Caco-2 (cell line): ENCODE measurements at regions of chr6 and their contacts with region 1.

Region 1: DNA sequence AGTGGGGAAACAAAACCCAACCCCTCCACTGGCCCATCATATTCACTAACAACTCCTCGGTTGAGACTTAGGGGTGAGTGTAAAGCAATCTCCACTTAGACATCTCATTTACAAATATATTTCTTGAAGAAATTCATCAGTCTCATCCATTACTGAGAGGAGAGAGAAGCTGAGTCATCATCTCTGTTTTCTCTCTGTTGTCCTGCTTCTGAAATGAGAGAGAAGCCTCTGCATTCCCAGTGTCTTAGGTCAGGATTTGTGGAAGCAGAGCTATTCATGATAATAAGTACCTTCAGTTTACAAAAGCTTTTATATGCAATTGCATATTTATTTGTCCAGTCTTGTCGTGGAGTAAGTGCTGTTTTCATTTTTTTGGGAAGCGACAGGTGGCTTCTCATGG is 879 bp downstream of the MEP1A start:
- DNase-seq: no peak
- H3K4me3 ChIP-seq: peak overlapping the region; percentile 28
- H3K4me3 Mint-ChIP-seq: peak overlapping the region; percentile 63
- H3K27ac Mint-ChIP-seq: peak overlapping the region; percentile 23
- H3K4me1 ChIP-seq: peaks cover 52% of the 10 kb centered on the region
- H3K4me1 Mint-ChIP-seq: peaks cover 52% of the 10 kb centered on the region
- H3K27me3 ChIP-seq: no peaks in the 10 kb centered on the region
- H3K27me3 Mint-ChIP-seq: no peaks in the 10 kb centered on the region
- CTCF ChIP-seq: no peak

Region 2: DNA sequence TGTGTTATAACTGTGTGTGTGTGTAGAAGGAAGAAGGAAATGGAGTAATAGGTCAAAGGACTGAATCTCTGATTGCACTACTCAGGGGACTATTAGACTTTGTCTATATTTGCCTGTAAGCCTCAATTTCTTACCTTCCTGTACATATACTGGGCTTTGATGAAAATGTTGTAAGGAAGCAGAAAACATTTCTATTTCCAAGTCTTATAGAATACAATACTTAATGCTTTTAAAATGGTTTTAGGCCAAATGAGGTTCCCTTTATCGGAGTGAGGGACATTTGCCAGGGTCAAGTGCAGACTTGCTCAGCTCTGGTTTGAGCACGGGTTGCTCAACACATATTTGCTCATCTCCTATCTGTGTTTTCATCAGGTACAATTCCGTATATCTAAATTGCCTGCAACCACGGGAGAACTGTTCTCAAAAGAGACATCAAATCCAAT is 27.4 kb after region 1 on chr6:
- CTCF ChIA-PET with region 1: interaction called, 3 read pairs
- POLR2A ChIA-PET with region 1: no interaction called
- intact Hi-C with region 1: loop called (anchors 1 kb)
- DNase-seq: no peak
- H3K4me3 ChIP-seq: no peak overlapping the region
- H3K4me3 Mint-ChIP-seq: no peak overlapping the region
- H3K27ac Mint-ChIP-seq: no peak overlapping the region
- H3K4me1 ChIP-seq: peaks cover 25% of the 10 kb centered on the region
- H3K4me1 Mint-ChIP-seq: peaks cover 7% of the 10 kb centered on the region
- H3K27me3 ChIP-seq: no peaks in the 10 kb centered on the region
- H3K27me3 Mint-ChIP-seq: no peaks in the 10 kb centered on the region
- CTCF ChIP-seq: no peak

Region 3: DNA sequence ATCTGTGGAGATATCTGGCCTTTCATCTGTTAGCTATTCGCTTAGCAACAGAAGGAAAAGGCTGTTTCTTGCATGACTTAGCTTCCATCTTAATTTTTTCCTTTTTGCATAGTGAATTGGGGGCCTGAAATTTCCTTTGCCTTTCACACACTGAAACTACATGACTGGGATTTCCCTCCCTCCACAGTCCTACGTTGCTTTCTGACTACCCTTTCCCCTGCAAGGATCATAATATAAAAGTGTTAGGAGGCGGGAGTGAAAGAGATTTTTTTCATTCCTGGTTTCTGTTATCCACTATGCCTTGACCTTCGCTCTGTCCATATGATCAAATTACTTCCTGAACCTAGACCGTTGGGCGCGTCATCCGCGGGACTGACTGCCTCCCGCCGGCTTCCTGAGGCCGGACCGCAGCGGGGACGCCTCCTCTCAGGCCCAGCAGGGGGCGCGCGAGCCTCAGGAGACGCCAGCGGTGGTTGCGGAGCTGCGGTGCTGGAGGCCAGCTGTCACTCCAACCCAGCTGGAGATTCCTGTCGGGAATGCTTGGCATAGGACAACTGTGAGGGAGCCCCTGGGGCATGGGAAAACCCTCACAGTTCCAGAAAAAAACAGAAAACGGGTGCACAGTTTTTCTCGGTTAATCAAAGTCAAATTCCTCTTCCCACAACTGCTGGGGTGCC is 54.8 kb after region 1 on chr6:
- CTCF ChIA-PET with region 1: interaction called, 4 read pairs
- POLR2A ChIA-PET with region 1: no interaction called
- intact Hi-C with region 1: loop called (anchors 1 kb)
- DNase-seq: peak; percentile 74 to 90
- H3K4me3 ChIP-seq: no peak overlapping the region
- H3K4me3 Mint-ChIP-seq: peak overlapping the region; percentile 55
- H3K27ac Mint-ChIP-seq: peak overlapping the region; percentile 2
- H3K4me1 ChIP-seq: no peaks in the 10 kb centered on the region
- H3K4me1 Mint-ChIP-seq: peaks cover 12% of the 10 kb centered on the region
- H3K27me3 ChIP-seq: no peaks in the 10 kb centered on the region
- H3K27me3 Mint-ChIP-seq: no peaks in the 10 kb centered on the region
- CTCF ChIP-seq: peak; percentile 94 to 95

Region 4: GRCh38 chr6:46893648-46894047 is 99.6 kb after region 1 on chr6:
- CTCF ChIA-PET with region 1: no interaction called
- POLR2A ChIA-PET with region 1: no interaction called
- intact Hi-C with region 1: loop called (anchors 1 kb)
- DNase-seq: no peak
- H3K4me3 ChIP-seq: no peak overlapping the region
- H3K4me3 Mint-ChIP-seq: no peak overlapping the region
- H3K27ac Mint-ChIP-seq: no peak overlapping the region
- H3K4me1 ChIP-seq: peaks cover 15% of the 10 kb centered on the region
- H3K4me1 Mint-ChIP-seq: peaks cover 11% of the 10 kb centered on the region
- H3K27me3 ChIP-seq: no peaks in the 10 kb centered on the region
- H3K27me3 Mint-ChIP-seq: no peaks in the 10 kb centered on the region
- CTCF ChIP-seq: no peak

Region 5: DNA sequence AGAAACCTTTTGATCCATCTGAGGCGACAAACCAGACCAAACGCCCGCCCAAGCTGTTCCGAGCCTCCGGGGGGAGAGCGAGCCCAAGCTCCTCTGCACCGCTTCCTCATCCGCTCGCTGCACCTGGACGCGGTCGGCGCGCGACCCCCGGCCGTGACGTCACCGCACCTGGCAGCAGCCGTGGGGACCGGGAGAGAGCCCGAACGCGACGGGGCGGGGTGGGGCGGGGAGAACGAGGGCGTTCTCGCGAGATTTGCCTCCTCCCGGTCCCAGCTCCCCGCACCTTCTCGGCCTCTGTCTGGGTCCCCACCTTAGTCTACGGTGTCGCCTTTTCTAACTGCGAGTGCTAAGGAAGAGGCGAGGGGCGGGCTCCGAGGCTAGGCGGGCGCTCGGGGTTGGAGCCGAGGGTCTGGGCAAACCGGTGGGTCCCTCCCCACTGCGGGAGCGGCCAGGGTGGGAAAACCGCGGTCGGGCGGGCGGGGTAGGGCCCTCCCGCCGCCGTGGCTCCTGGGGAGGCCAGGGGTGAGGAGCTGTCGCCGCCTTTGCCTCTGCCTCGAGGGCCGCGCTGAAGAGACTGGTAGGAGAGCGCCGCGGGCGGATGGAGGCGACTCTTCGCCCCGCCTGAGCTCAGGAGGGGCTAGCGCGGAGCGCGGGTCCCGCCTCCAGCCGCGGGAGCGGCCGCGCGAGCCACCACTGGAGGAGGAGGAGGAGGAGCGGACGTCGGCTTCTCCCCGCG is 683.6 kb after region 1 on chr6 and contains the start of gene CD2AP:
- CTCF ChIA-PET with region 1: no interaction called
- POLR2A ChIA-PET with region 1: no interaction called
- intact Hi-C with region 1: loop called (anchors 5 kb)
- DNase-seq: peak; percentile 92 to 95
- H3K4me3 ChIP-seq: peak within 1 kb of the TSS; percentile 78
- H3K4me3 Mint-ChIP-seq: peak within 1 kb of the TSS; percentile 97
- H3K27ac Mint-ChIP-seq: peak within 1 kb of the TSS; percentile 93
- H3K4me1 ChIP-seq: peaks cover 14% of the 10 kb centered on the region
- H3K4me1 Mint-ChIP-seq: peaks cover 28% of the 10 kb centered on the region
- H3K27me3 ChIP-seq: no peaks in the 10 kb centered on the region
- H3K27me3 Mint-ChIP-seq: no peaks in the 10 kb centered on the region
- CTCF ChIP-seq: peak in 1 of 2 experiments; percentile 26
- total RNA-seq, gene CD2AP: 65.3 and 69.3 TPM in 2 replicates